Activated T-helper 2 cell treated with anti-CD3 and anti-CD28 coated beads, Interferon-gamma antibody, Interleukin-2, Interleukin-4, amounts not matched to agents 10 μg/mL and 5 μg/mL and 100 μg/mL, durations not matched to agents 14 hours and 24 hours and 36 hours (primary cell): ENCODE measurements at regions of chr17 and their contacts with region 1.

Region 1: GRCh38 chr17:67452681-67453554 is 75.8 kb downstream of the PITPNC1 start:
- DNase-seq: no peak
- H3K4me3 Mint-ChIP-seq: peak overlapping the region; percentile 34
- H3K27ac Mint-ChIP-seq: peak overlapping the region; percentile 87
- H3K4me1 Mint-ChIP-seq: peaks cover 55% of the 10 kb centered on the region
- H3K27me3 Mint-ChIP-seq: no peaks in the 10 kb centered on the region

Region 2: DNA sequence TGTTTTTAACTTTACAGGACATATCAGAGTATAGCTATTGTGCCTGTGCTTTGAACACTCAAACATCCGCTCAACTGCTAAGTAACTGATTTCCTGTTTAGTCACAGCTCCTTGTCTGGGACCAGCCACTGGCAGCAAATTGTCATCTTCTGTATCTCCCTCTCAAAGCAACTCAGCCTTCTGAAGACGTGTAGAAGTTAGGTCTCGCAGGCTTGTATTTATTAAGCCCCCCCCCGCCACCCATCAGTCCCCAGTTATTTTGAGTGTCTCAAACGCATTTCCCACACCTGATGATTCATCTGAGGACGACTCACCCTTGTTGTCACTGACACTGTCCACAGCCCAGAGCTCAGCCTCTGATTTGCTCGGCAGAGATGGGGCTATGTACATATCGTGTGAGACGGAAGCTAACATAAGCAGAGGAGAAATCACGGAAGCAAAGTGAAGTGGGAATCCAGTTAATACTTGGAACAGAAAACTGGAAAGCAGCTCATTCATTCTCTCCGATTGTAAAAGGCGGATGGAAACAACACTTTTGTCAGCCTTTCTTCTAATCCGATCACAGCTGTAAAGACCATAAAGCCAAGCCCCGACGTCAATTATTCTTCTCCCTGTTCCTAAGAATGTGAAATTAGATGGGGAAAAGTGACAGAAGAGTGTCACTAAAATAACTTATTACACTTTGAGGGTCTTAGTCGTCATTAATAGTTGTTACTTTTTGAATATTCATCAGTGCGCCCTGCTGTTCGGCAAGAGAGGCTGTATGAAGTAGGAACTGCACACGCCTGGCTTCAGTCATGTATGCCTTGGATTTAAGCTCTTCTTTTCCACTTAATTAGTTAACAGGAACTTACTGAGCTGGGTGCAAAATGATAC is 11.6 kb before region 1 on chr17:
- intact Hi-C with region 1: loop called (anchors 1 kb)
- DNase-seq: peak; percentile 65
- H3K4me3 Mint-ChIP-seq: peak overlapping the region; percentile 82
- H3K27ac Mint-ChIP-seq: peak overlapping the region; percentile 98
- H3K4me1 Mint-ChIP-seq: peaks cover 39% of the 10 kb centered on the region
- H3K27me3 Mint-ChIP-seq: no peaks in the 10 kb centered on the region

Region 3: GRCh38 chr17:67475236-67475937 is 22.5 kb after region 1 on chr17:
- intact Hi-C with region 1: loop called (anchors 2 kb)
- DNase-seq: peak; percentile 77
- H3K4me3 Mint-ChIP-seq: peak overlapping the region; percentile 30
- H3K27ac Mint-ChIP-seq: peak overlapping the region; percentile 62
- H3K4me1 Mint-ChIP-seq: peaks cover 44% of the 10 kb centered on the region
- H3K27me3 Mint-ChIP-seq: peaks cover 3% of the 10 kb centered on the region